ENCODE measurements at regions of chr17 and their contacts with region 1.

Region 1: GRCh38 chr17:42019509-42020404 is at the start of gene NKIRAS2:
- DNase-seq: peak; percentile 96
- H3K4me3 Mint-ChIP-seq: peak within 1 kb of the TSS; percentile 91
- H3K27ac Mint-ChIP-seq: peak within 1 kb of the TSS; percentile 78
- H3K4me1 Mint-ChIP-seq: peaks cover 58% of the 10 kb centered on the region
- H3K27me3 Mint-ChIP-seq: no peaks in the 10 kb centered on the region
- total RNA-seq, gene NKIRAS2: 12.4 to 13.2 TPM

Region 2: DNA sequence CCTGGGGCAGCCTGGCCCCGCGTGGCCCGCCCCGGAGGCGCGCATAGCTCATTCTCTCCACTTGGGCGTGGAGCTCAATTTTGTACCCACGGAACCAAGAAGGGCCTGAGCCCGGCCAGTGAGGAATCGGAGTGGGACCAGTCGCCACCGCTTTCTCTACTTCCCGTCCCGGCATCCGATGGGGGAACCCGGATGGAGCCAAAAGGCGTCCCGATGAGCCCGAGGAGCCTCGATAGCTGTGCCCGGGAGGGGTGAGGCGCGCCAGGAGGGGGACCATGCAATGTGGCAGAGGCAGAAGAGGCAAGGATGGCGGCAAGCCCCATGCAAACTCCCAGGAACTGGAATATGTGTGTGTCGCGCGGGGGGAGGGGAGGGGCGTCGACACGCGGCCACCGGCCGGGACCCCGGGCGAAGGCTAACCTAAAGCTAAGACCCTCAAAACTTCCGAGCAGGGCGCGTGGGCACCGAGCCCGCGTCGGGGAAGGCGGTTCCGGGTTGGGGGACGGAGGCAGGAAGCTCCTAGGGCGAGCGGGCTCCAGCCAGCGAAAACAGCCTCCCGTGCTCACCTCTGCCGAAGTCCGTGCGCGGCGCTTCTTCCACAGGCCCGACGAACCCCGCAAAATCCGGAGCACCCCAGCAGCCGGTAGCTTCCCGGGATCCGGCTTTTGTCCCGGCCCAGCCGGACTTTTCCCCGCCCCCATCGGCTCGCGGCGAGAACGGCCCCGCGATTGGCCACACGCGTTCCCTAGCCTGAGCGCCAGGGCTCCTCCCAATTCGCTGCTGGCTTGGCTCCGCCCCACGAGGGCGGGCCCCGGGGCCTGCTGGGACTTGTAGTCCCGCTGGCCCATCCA is 101.2 kb before region 1 on chr17 and contains the start of gene ACLY:
- CTCF ChIA-PET with region 1: no interaction called
- intact Hi-C with region 1: loop called (anchors 5 kb)
- DNase-seq: peak; percentile 96
- H3K4me3 Mint-ChIP-seq: peak within 1 kb of the TSS; percentile 94
- H3K27ac Mint-ChIP-seq: peak within 1 kb of the TSS; percentile 82
- H3K4me1 Mint-ChIP-seq: peaks cover 39% of the 10 kb centered on the region
- H3K27me3 Mint-ChIP-seq: no peaks in the 10 kb centered on the region
- total RNA-seq, gene ACLY: 153 to 161 TPM

Region 3: GRCh38 chr17:41987642-41988041 is 32.1 kb before region 1 on chr17:
- CTCF ChIA-PET with region 1: interaction called, 3 read pairs
- intact Hi-C with region 1: loop called (anchors 2 kb)
- DNase-seq: peak; percentile 58
- H3K4me3 Mint-ChIP-seq: no peak overlapping the region
- H3K27ac Mint-ChIP-seq: peak overlapping the region; percentile 84
- H3K4me1 Mint-ChIP-seq: peaks cover 17% of the 10 kb centered on the region
- H3K27me3 Mint-ChIP-seq: no peaks in the 10 kb centered on the region

Region 4: GRCh38 chr17:42067351-42068091 is 47.8 kb after region 1 on chr17:
- CTCF ChIA-PET with region 1: interaction called, 23 read pairs
- intact Hi-C with region 1: no loop called
- DNase-seq: peak; percentile 83
- H3K4me3 Mint-ChIP-seq: no peak overlapping the region
- H3K27ac Mint-ChIP-seq: no peak overlapping the region
- H3K4me1 Mint-ChIP-seq: peaks cover 22% of the 10 kb centered on the region
- H3K27me3 Mint-ChIP-seq: peaks cover 15% of the 10 kb centered on the region

Region 5: DNA sequence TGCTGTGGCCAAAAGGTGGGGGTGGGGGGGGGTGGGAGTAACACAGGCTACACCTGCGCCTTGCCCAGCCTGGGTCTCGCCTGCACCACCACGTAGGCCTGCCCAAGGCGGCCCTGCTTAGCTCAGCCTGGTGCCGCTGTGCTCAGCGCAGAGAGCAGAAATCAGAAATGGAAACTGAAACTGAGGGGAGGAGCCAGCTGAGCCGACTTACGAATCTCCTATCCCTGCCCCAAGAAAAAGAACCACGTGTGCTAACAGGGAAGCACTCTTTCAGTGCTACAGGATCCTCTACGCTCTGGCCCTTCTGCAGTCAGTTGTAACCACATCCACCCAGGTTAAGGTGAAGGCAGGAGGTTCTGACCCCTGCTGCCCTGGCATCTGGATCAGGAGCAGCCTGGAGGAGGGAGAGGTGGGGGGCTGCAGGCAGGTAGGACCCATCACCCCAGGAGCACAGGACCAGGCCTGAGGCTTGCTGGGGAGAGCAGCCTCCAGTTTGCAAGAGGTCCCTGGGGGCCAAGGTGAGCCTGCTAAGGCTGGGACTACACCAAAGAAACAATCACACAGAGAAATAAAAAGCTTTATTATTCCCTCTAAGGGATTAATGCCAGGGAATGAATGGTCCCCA is 92.9 kb after region 1 on chr17 and contains the start of gene DHX58:
- CTCF ChIA-PET with region 1: interaction called, 7 read pairs
- intact Hi-C with region 1: loop called (anchors 1 kb)
- DNase-seq: peak; percentile 90
- H3K4me3 Mint-ChIP-seq: peak within 1 kb of the TSS; percentile 81
- H3K27ac Mint-ChIP-seq: peak within 1 kb of the TSS; percentile 92
- H3K4me1 Mint-ChIP-seq: peaks cover 38% of the 10 kb centered on the region
- H3K27me3 Mint-ChIP-seq: no peaks in the 10 kb centered on the region
- total RNA-seq, gene DHX58: 44.4 to 46.3 TPM

Region 6: DNA sequence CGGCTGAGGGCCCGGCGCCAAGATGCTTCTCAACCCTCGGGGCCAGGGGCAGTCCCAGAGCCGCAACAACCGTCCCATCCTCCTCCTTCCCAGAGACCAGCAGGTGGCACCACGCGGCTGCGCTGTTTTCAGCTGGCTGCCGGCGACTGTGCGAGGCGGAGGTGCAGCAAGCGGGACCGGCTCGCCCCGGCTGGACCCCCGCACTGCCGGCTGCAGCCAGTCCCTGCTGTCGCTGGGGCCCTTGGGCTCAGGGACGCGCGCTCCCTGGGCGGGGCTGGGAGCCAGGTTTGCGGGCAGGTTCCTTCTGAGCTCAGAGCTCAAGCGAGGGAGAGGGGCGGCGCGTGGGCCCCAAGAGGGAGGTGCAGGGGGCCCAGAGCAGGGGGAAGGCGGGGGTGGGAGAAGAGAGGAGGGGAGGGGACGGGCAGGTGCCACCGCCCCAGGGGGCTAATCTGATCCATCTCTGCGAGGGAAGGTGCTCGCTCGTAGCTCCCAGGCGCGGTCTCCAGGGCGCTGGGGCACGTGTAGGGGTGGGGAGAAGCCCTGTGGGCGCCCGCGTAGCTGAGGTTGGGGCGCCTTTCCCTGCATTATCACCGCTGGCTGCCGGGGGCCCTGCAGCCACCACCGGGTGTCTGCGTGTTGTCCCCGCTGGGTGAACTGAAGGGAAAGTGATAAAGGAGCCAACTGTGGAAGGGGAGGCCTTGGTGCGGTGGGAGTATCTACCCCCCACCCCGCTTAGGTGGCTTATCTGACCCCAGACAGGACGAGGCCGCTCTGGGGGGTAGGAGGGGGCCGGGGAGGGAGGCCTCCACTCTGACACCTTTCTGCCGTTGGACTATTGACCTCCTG is 292.8 kb after region 1 on chr17:
- CTCF ChIA-PET with region 1: no interaction called
- intact Hi-C with region 1: loop called (anchors 5 kb)
- DNase-seq: peak; percentile 95
- H3K4me3 Mint-ChIP-seq: peak overlapping the region; percentile 44
- H3K27ac Mint-ChIP-seq: peak overlapping the region; percentile 92
- H3K4me1 Mint-ChIP-seq: peaks cover 86% of the 10 kb centered on the region
- H3K27me3 Mint-ChIP-seq: no peaks in the 10 kb centered on the region